A673 (cell line): ENCODE measurements at regions of chr11 and their contacts with region 1.

Region 1: GRCh38 chr11:62169091-62169847 is 20.7 kb upstream of the SCGB1D1 start:
- DNase-seq: no peak
- H3K4me3 ChIP-seq: no peak overlapping the region
- H3K27ac ChIP-seq: no peak overlapping the region
- H3K4me1 ChIP-seq: no peaks in the 10 kb centered on the region
- H3K27me3 ChIP-seq: peaks cover 51% of the 10 kb centered on the region
- CTCF ChIP-seq: no peak

Region 2: DNA sequence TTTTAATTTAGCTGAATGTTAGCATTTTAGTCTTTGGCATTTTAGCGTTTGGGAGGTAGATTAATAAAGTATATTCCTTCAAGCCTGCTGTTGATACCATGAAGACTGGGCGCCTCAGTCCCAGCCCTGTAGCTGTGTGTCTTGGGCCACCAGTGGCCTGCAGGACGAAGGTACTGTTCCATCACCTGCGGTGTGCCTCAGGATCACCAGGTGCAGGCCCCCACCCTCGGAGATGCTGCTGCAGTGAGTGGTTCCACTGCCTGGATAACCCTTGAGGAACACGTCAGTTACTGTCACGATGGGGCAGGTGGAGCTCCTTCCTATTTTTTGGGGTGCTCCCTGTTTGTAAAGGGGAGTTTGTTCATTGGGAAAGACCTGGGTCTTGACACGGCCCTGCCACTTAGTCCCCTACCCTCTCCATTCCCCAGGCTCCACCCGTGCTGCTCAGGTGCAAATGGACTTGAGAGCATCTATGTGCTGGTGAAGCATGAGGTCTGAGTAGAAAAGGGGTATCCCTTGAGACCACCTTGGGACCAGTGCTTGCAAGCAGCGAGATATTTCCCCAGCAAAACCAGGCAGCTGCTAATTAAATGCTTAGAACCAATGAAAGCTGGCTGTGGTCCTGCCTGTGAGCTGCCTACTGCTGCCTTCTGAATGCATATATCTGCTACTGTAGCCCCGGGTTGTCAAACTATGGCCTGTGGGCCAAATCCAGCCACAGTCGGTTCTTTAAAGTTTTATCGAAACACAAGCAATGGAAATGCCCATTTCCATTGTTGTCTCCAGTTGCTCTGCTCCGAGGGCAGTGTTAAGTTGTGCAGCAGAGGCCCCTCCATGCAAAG is 16.8 kb before region 1 on chr11:
- CTCF ChIA-PET with region 1: interaction called, 6 read pairs
- POLR2A ChIA-PET with region 1: interaction called, 10 read pairs
- intact Hi-C with region 1: no loop called
- DNase-seq: no peak
- H3K4me3 ChIP-seq: no peak overlapping the region
- H3K27ac ChIP-seq: no peak overlapping the region
- H3K4me1 ChIP-seq: no peaks in the 10 kb centered on the region
- H3K27me3 ChIP-seq: no peaks in the 10 kb centered on the region
- CTCF ChIP-seq: no peak

Region 3: DNA sequence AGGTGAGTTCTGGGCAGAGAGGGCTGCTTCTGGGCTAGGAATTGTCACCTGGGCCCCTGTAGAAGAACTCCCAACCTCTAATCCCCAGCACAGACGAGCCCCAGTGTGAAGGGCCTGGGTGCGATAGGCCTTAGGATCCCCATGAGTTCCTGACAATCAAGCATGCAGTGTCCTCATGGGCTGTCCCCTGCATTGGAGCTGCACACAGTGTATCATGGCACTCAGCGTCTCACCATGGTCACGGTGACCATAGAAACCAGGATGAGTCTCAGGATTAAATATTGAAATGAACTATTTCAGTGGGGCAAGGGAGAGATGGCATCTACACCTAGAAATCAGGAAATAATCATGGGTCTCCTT is 39.5 kb after region 1 on chr11:
- CTCF ChIA-PET with region 1: no interaction called
- POLR2A ChIA-PET with region 1: no interaction called
- intact Hi-C with region 1: loop called (anchors 5 kb)
- DNase-seq: no peak
- H3K4me3 ChIP-seq: no peak overlapping the region
- H3K27ac ChIP-seq: no peak overlapping the region
- H3K4me1 ChIP-seq: no peaks in the 10 kb centered on the region
- H3K27me3 ChIP-seq: peaks cover 9% of the 10 kb centered on the region
- CTCF ChIP-seq: no peak

Region 4: DNA sequence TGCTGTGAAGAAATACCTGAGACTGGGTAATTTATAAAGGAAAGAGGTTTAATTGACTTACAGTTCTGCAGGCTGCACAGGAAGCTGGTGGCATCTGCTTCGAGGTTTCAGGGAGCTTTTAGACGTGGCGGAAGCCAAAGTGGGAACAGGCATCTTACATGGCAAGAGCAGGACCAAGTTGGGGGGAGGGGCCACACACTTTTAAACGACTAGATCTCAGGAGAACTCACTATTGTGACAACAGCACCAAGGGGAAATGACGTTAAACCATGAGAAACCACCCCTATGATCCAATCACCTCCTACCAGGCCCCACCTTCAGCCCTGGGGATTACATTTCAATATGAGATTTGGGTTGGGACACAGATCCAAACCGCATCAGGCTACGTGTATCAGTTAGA is 140.7 kb after region 1 on chr11:
- CTCF ChIA-PET with region 1: interaction called, 8 read pairs
- POLR2A ChIA-PET with region 1: no interaction called
- intact Hi-C with region 1: loop called (anchors 2 kb)
- DNase-seq: no peak
- H3K4me3 ChIP-seq: no peak overlapping the region
- H3K27ac ChIP-seq: no peak overlapping the region
- H3K4me1 ChIP-seq: no peaks in the 10 kb centered on the region
- H3K27me3 ChIP-seq: peaks cover 18% of the 10 kb centered on the region
- CTCF ChIP-seq: no peak

Region 5: GRCh38 chr11:62497132-62497915 is 328.1 kb after region 1 on chr11:
- CTCF ChIA-PET with region 1: no interaction called
- POLR2A ChIA-PET with region 1: no interaction called
- intact Hi-C with region 1: no loop called
- DNase-seq: peak; percentile 81
- H3K4me3 ChIP-seq: no peak overlapping the region
- H3K27ac ChIP-seq: no peak overlapping the region
- H3K4me1 ChIP-seq: peaks cover 10% of the 10 kb centered on the region
- H3K27me3 ChIP-seq: no peaks in the 10 kb centered on the region
- CTCF ChIP-seq: peak; percentile 68